ENCODE measurements at regions of chr14 and their contacts with region 1.

Region 1: GRCh38 chr14:95993768-95994592 is 45.2 kb upstream of the C14orf132 start:
- DNase-seq: no peak
- H3K4me3 ChIP-seq: no peak overlapping the region
- H3K27ac ChIP-seq: no peak overlapping the region
- H3K4me1 ChIP-seq: no peaks in the 10 kb centered on the region
- H3K27me3 ChIP-seq: peaks cover 0 to 25% (median 3%) of the 10 kb centered on the region in 4 donors
- CTCF ChIP-seq: peak; percentile 72 to 81 (median 81)
- EP300 ChIP-seq: no peak
- POLR2A ChIP-seq: no peak

Region 2: DNA sequence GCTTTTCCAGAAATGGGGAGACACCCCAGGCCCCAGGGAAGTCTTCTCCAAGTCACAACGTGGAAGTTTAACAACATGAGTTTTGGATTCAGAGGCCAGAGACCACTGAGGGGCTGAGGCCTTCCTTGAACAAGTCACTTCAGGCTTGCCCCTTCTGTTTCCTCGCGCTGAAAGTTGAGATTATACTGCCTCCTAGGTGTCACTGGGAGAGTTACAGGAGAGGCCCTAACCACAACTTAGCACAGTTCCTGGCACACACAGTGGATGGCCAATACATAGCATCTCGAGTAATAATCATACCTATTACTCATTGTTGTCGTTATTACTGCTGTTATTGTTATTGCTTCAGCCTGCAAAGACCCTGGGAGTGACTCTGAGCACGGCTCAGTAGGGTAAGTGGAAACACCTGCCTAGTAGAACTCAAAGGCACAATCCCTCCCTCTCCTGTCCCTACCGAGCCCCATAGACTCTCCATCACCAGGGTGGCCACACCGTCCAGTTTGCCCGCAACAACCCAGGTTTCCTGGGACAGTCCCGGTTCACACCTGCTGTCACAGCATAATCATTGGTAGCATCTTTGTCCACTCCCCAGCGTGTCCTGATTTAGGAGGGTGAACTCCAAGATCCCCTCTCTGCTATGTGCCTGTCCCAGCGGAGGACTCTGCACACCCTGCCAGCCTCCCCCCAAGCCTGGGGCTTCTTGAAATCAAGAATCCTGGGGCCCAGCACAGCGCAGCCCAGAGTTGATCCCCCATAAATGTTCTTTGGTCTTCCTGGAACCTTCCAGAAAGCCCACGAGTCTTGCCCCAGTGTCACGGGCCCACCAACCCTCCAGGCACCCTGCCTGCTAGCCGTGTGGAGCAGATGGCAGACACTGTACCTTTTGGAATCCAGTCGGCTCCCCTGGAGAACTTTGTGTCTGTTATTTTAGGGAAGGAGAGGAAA is 562.5 kb before region 1 on chr14:
- intact Hi-C with region 1: loop called (anchors 10 kb)
- DNase-seq: no peak
- H3K4me3 ChIP-seq: no peak overlapping the region
- H3K27ac ChIP-seq: peak overlapping the region in 2 of 4 donors; percentile 22 to 34
- H3K4me1 ChIP-seq: peaks cover 4 to 9% (median 8%) of the 10 kb centered on the region in 4 donors
- H3K27me3 ChIP-seq: peaks cover 0 to 3% (median 0%) of the 10 kb centered on the region in 4 donors
- CTCF ChIP-seq: peak in 2 of 3 experiments; percentile 33 to 55
- EP300 ChIP-seq: no peak
- POLR2A ChIP-seq: no peak

Region 3: GRCh38 chr14:95561001-95561412 is 433.0 kb before region 1 on chr14:
- intact Hi-C with region 1: loop called (anchors 2 kb)
- DNase-seq: peak; percentile 94
- H3K4me3 ChIP-seq: no peak overlapping the region
- H3K27ac ChIP-seq: no peak overlapping the region
- H3K4me1 ChIP-seq: peaks cover 0 to 10% (median 4%) of the 10 kb centered on the region in 4 donors
- H3K27me3 ChIP-seq: peaks cover 0 to 3% (median 0%) of the 10 kb centered on the region in 4 donors
- CTCF ChIP-seq: peak; percentile 86 to 93 (median 92)
- EP300 ChIP-seq: no peak
- POLR2A ChIP-seq: no peak

Region 4: GRCh38 chr14:96281486-96281885 is 287.5 kb after region 1 on chr14:
- intact Hi-C with region 1: loop called (anchors 5 kb)
- DNase-seq: no peak
- H3K4me3 ChIP-seq: no peak overlapping the region
- H3K27ac ChIP-seq: no peak overlapping the region
- H3K4me1 ChIP-seq: peaks cover 0 to 15% (median 8%) of the 10 kb centered on the region in 4 donors
- H3K27me3 ChIP-seq: no peaks in the 10 kb centered on the region
- CTCF ChIP-seq: no peak
- EP300 ChIP-seq: no peak
- POLR2A ChIP-seq: no peak

Measured in esophagus muscularis mucosa (tissue), 4 donors.